Prostate gland (tissue), 2 donors: ENCODE measurements at regions of chr5 and their contacts with region 1.

Region 1: DNA sequence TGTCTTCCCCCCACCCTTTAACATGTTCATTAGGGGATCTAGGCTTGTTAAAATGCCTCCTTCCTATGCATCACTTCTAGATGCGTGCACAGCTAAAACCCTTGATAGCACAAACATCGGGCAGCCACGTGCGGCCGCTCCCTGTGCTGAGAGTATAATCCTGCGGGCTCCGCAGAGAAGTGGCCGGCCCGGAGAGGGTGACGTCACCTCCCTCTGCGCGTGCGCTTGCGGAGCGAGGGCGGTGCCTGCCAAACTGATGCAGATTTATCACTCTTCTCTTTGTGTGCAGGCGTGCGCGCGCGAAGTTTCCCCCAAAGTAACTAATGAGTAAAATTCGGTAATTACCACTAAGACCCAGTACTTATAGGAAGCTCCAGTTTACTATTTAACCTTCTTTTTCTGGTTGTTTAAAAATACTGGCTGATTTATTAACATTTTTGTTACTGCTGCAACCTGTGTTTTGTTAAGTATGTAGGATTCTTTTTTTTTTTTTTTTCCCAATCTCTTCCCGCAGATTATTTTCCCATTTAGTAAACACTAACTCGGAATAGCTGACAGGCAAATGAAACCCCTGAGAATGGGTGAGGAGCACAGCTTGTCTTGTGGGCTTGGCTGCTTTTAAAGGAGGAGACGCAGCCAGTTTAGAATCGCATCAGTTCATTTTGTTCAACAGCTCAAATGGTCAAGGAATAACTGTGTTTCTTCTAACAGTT is 121.6 kb downstream of the TRIO start:
- DNase-seq: peak; percentile 89
- H3K4me3 ChIP-seq: peak overlapping the region; percentile 4 to 11
- H3K27ac ChIP-seq: peak overlapping the region; percentile 49 to 54
- H3K4me1 ChIP-seq: peaks cover 17% of the 10 kb centered on the region
- H3K27me3 ChIP-seq: no peaks in the 10 kb centered on the region
- CTCF ChIP-seq: peak in 1 of 4 experiments; percentile 18
- POLR2A ChIP-seq: peak; percentile 68

Region 2: GRCh38 chr5:13987843-13988464 is 276.8 kb before region 1 on chr5:
- intact Hi-C with region 1: loop called (anchors 5 kb)
- DNase-seq: peak; percentile 58
- H3K4me3 ChIP-seq: no peak overlapping the region
- H3K27ac ChIP-seq: no peak overlapping the region
- H3K4me1 ChIP-seq: no peaks in the 10 kb centered on the region
- H3K27me3 ChIP-seq: no peaks in the 10 kb centered on the region
- CTCF ChIP-seq: peak; percentile 70 to 90 (median 83)
- POLR2A ChIP-seq: no peak

Region 3: GRCh38 chr5:14035859-14036440 is 228.8 kb before region 1 on chr5:
- intact Hi-C with region 1: loop called (anchors 5 kb)
- DNase-seq: peak; percentile 59
- H3K4me3 ChIP-seq: no peak overlapping the region
- H3K27ac ChIP-seq: peak overlapping the region; percentile 54 to 55
- H3K4me1 ChIP-seq: no peaks in the 10 kb centered on the region
- H3K27me3 ChIP-seq: no peaks in the 10 kb centered on the region
- CTCF ChIP-seq: no peak
- POLR2A ChIP-seq: no peak

Region 4: GRCh38 chr5:14108170-14108996 is 156.4 kb before region 1 on chr5:
- intact Hi-C with region 1: no loop called
- DNase-seq: peak; percentile 30
- H3K4me3 ChIP-seq: no peak overlapping the region
- H3K27ac ChIP-seq: no peak overlapping the region
- H3K4me1 ChIP-seq: no peaks in the 10 kb centered on the region
- H3K27me3 ChIP-seq: no peaks in the 10 kb centered on the region
- CTCF ChIP-seq: peak in 3 of 4 experiments; percentile 29 to 52 (median 44)
- POLR2A ChIP-seq: no peak

Region 5: DNA sequence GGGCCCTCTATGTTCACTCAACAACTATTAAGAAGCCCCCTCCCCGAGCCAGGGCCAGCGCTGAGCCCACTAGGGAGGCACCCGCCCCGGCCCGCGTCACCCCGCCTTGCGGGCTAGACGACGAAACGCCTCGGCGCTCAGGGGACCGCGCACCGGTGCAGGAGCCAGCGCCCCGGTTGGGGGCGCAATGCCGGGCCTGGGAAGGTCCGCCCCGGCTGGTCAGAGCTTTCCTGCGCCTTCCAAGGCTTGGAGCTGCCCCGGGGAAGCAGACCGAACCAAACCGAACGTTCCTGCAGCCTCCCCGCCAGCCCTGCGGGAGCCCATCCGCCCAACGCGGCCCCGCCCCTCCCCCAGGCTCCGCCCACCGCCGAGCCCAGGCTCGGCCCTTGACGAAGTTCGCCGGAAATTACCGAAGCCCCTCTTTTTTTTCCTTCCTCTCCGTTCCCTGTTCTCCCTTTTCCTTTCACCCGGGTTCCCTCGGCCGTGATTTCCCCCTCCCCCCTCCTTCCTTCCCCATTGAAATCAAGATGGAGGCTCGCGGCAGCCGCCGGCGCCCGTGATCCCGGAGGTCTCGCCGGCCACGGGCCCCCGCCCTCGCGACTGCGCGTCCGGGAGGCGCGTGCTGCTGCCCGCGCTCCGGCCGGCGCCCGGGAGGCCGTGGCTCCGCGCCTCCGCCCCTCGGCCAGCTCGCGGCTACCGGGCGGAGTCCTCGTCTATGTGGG is 121.8 kb before region 1 on chr5 and contains the start of gene TRIO:
- intact Hi-C with region 1: loop called (anchors 2 kb)
- DNase-seq: peak; percentile 93
- H3K4me3 ChIP-seq: peak within 1 kb of the TSS; percentile 65 to 73
- H3K27ac ChIP-seq: peak within 1 kb of the TSS; percentile 94 to 95
- H3K4me1 ChIP-seq: peaks cover 2% of the 10 kb centered on the region
- H3K27me3 ChIP-seq: no peaks in the 10 kb centered on the region
- CTCF ChIP-seq: peak in 3 of 4 experiments; percentile 46 to 61 (median 59)
- POLR2A ChIP-seq: peak; percentile 71
- total RNA-seq, gene TRIO: 90.3 to 197 TPM

Region 6: DNA sequence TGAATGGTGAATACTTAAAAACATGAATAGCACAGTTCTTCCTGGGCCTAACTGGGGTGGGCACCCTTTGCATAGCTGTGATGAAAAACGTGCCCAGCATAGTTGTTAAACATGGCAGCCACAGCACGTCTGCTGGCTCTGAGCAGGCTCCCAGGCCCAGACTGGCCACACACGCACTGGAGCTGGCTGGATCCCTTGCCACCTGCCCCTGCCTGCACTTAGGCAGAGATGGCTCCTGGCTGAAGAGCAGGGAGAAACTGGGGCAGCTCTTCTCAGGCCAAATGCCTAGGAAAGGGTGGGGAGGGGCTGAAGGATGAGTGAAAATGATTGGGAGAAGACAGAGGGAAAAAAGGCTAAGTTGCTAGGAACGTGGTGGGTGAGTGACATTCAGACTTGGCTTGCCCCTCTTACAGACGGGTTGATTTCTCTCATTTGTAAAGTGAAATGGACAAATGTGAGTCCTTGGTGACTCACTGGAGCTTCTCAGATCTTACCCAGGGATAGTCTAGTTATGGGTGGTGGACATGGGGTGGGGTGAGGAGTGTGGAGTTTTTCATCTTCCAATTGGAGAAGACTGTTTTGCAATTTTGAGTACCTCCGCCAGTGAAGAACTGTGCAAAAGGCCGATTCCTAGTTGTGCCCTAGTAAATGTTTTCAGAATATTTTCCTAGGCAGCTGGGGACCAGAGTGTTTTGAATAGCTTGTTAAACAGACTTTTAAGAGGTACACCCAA is 79.3 kb before region 1 on chr5:
- intact Hi-C with region 1: loop called (anchors 5 kb)
- DNase-seq: no peak
- H3K4me3 ChIP-seq: no peak overlapping the region
- H3K27ac ChIP-seq: peak overlapping the region; percentile 72
- H3K4me1 ChIP-seq: peaks cover 3% of the 10 kb centered on the region
- H3K27me3 ChIP-seq: no peaks in the 10 kb centered on the region
- CTCF ChIP-seq: no peak
- POLR2A ChIP-seq: no peak